ENCODE measurements at regions of chr4 and their contacts with region 1.

Region 1: DNA sequence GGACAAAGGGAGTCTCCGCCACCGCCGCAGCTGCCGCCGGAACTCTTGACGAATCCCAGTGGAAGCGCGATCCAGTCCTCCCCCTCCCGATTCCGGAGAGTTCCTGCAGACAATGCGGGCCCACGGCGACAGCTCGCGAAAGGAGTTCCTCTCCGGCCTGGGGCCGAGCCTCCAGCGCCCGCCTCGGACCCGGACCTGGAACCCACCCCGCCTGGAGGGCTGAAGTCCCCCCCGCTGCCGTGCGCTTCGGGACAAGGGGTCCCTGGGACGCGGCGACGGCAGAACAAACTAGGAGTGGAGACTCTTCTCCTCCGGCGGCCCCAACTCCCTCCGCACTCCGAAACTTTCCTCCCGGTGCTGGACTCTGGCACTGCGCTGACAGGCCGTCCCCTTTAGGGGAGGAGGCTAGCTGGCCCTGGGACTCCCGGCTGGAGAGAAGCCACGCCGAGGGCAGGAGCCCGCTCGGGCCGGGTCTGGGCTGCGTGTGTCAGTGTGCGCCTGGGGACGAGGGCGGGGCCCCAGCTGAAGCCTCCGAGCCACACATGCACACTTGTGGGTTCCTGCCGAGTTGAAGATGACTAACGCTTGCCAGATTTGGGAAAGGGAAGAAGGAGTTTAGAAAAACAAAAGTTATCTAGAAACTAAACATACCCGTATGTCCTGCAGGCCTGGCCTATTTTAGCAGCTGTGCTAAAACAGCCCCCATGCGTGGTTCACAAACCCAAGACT is at the start of gene ANTXR2:
- DNase-seq: peak; percentile 35 to 82 (median 70)
- ATAC-seq: peak; percentile 77
- H3K4me3 ChIP-seq: peak within 1 kb of the TSS; percentile 79 to 80
- H3K4me3 Mint-ChIP-seq: peak within 1 kb of the TSS; percentile 97
- H3K27ac ChIP-seq: peak within 1 kb of the TSS; percentile 69 to 70
- H3K27ac Mint-ChIP-seq: peak within 1 kb of the TSS; percentile 96
- H3K4me1 ChIP-seq: peaks cover 30% of the 10 kb centered on the region
- H3K4me1 Mint-ChIP-seq: peaks cover 53% of the 10 kb centered on the region
- H3K27me3 ChIP-seq: no peaks in the 10 kb centered on the region
- H3K27me3 Mint-ChIP-seq: no peaks in the 10 kb centered on the region
- CTCF ChIP-seq: no peak
- total RNA-seq, gene ANTXR2: 6.9 to 8.6 TPM

Region 2: GRCh38 chr4:78938868-78939666 is 1133.8 kb before region 1 on chr4 and contains the start of gene PAQR3:
- CTCF ChIA-PET with region 1: no interaction called
- POLR2A ChIA-PET with region 1: no interaction called
- intact Hi-C with region 1: loop called (anchors 5 to 10 kb)
- DNase-seq: peak; percentile 67 to 92 (median 83)
- ATAC-seq: peak; percentile 96
- H3K4me3 ChIP-seq: peak within 1 kb of the TSS; percentile 88 to 89
- H3K4me3 Mint-ChIP-seq: peak within 1 kb of the TSS; percentile 90
- H3K27ac ChIP-seq: peak within 1 kb of the TSS; percentile 67 to 77
- H3K27ac Mint-ChIP-seq: peak within 1 kb of the TSS; percentile 86
- H3K4me1 ChIP-seq: peaks cover 26% of the 10 kb centered on the region
- H3K4me1 Mint-ChIP-seq: peaks cover 40% of the 10 kb centered on the region
- H3K27me3 ChIP-seq: no peaks in the 10 kb centered on the region
- H3K27me3 Mint-ChIP-seq: peaks cover 11% of the 10 kb centered on the region
- CTCF ChIP-seq: no peak
- total RNA-seq, gene PAQR3: 17.8 to 19.3 TPM

Region 3: DNA sequence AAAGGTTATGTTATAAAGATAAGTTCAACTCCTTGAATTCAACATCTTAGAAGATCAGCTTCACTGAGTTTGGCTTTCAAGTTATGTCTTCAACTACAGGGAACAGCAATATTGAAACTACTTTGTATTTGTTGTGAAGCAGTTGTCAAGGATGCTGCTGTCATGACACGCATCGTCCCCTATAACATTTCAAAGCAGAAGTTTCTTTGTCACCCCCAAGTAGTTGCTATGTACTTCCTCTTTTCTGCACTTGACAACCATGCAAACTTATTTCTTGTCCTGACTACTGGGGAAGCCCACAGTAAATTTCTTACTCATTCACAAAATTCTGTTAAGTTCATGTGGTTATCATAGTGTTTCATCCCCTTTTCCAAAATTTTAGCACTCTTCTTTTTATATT is 14.2 kb before region 1 on chr4:
- CTCF ChIA-PET with region 1: interaction called, 3 read pairs
- POLR2A ChIA-PET with region 1: interaction called, 5 read pairs
- intact Hi-C with region 1: loop called in 1 of 2 experiments (anchors 1 kb)
- DNase-seq: peak in 5 of 9 experiments; percentile 35 to 93 (median 56)
- ATAC-seq: peak; percentile 91
- H3K4me3 ChIP-seq: peak overlapping the region; percentile 4 to 18
- H3K4me3 Mint-ChIP-seq: peak overlapping the region; percentile 74
- H3K27ac ChIP-seq: peak overlapping the region; percentile 86 to 87
- H3K27ac Mint-ChIP-seq: peak overlapping the region; percentile 94
- H3K4me1 ChIP-seq: peaks cover 13% of the 10 kb centered on the region
- H3K4me1 Mint-ChIP-seq: peaks cover 23% of the 10 kb centered on the region
- H3K27me3 ChIP-seq: no peaks in the 10 kb centered on the region
- H3K27me3 Mint-ChIP-seq: no peaks in the 10 kb centered on the region
- CTCF ChIP-seq: no peak

Region 4: GRCh38 chr4:80101792-80102116 is 28.8 kb after region 1 on chr4:
- CTCF ChIA-PET with region 1: no interaction called
- POLR2A ChIA-PET with region 1: no interaction called
- intact Hi-C with region 1: no loop called
- DNase-seq: no peak
- ATAC-seq: no peak
- H3K4me3 ChIP-seq: no peak overlapping the region
- H3K4me3 Mint-ChIP-seq: no peak overlapping the region
- H3K27ac ChIP-seq: no peak overlapping the region
- H3K27ac Mint-ChIP-seq: no peak overlapping the region
- H3K4me1 ChIP-seq: no peaks in the 10 kb centered on the region
- H3K4me1 Mint-ChIP-seq: no peaks in the 10 kb centered on the region
- H3K27me3 ChIP-seq: peaks cover 0 to 2% of the 10 kb centered on the region in 2 experiments
- H3K27me3 Mint-ChIP-seq: peaks cover 4% of the 10 kb centered on the region
- CTCF ChIP-seq: no peak

Region 5: DNA sequence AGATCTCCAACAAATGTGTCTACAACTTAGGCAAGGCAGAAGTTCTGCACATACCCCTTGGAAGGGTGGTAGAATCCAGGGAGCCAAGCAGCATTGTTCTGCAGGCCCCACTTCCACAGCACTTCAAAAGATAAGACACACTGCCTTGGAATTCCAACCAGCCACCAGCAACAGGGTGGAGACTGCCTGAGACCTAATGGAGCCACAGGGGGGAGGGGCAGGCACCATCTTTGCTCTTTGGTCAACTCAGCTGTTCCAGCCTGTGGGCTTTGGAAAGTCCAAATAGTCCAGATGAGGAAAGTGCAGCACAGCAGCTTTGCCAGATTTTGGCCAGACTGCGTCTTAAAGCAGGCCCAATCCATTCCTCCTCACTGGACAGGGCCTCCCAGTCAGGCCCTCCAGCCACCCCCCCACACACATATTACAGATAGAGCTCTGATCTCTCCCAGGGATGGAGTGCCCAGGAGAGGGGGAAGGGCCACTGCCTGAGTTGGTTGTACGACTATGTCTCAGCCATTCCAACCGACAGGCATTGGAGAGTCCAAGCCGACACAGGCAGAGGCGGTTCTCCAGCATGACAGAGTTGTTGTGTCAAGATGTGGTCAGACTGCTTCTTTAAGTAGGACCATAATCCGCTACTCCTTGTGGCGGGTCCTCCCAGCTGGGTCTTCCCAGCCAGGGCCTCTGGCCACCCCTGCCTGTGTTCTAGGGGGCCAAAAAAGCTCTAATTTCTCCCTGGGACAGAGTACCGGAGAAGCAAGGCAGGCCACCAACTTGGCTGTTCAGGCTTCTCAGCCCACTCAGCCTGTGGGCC is 42.7 kb after region 1 on chr4:
- CTCF ChIA-PET with region 1: no interaction called
- POLR2A ChIA-PET with region 1: no interaction called
- intact Hi-C with region 1: no loop called
- DNase-seq: no peak
- ATAC-seq: no peak
- H3K4me3 ChIP-seq: no peak overlapping the region
- H3K4me3 Mint-ChIP-seq: no peak overlapping the region
- H3K27ac ChIP-seq: no peak overlapping the region
- H3K27ac Mint-ChIP-seq: no peak overlapping the region
- H3K4me1 ChIP-seq: no peaks in the 10 kb centered on the region
- H3K4me1 Mint-ChIP-seq: no peaks in the 10 kb centered on the region
- H3K27me3 ChIP-seq: no peaks in the 10 kb centered on the region
- H3K27me3 Mint-ChIP-seq: peaks cover 3% of the 10 kb centered on the region
- CTCF ChIP-seq: no peak

Measured in CD8-positive, alpha-beta T cell (primary cell).